ENCODE measurements at regions of chr6 and their contacts with region 1.

Region 1: GRCh38 chr6:36504982-36505381 is 42.3 kb downstream of the STK38 start:
- DNase-seq: no peak
- H3K4me3 ChIP-seq: no peak overlapping the region
- H3K27ac ChIP-seq: no peak overlapping the region
- H3K4me1 ChIP-seq: no peaks in the 10 kb centered on the region
- CTCF ChIP-seq: no peak

Region 2: GRCh38 chr6:36340618-36341454 is 164.1 kb before region 1 on chr6:
- CTCF ChIA-PET with region 1: no interaction called
- POLR2A ChIA-PET with region 1: no interaction called
- intact Hi-C with region 1: no loop called
- DNase-seq: peak; percentile 66
- H3K4me3 ChIP-seq: no peak overlapping the region
- H3K27ac ChIP-seq: no peak overlapping the region
- H3K4me1 ChIP-seq: no peaks in the 10 kb centered on the region
- CTCF ChIP-seq: peak; percentile 96

Region 3: GRCh38 chr6:36526066-36526465 is 21.1 kb after region 1 on chr6:
- CTCF ChIA-PET with region 1: no interaction called
- POLR2A ChIA-PET with region 1: interaction called, 11 read pairs
- intact Hi-C with region 1: no loop called
- DNase-seq: no peak
- H3K4me3 ChIP-seq: no peak overlapping the region
- H3K27ac ChIP-seq: no peak overlapping the region
- H3K4me1 ChIP-seq: no peaks in the 10 kb centered on the region
- CTCF ChIP-seq: no peak

Region 4: GRCh38 chr6:37525460-37526357 is 1020.7 kb after region 1 on chr6:
- CTCF ChIA-PET with region 1: interaction called, 10 read pairs
- POLR2A ChIA-PET with region 1: no interaction called
- intact Hi-C with region 1: no loop called
- DNase-seq: no peak
- H3K4me3 ChIP-seq: no peak overlapping the region
- H3K27ac ChIP-seq: no peak overlapping the region
- H3K4me1 ChIP-seq: no peaks in the 10 kb centered on the region
- CTCF ChIP-seq: no peak